ENCODE measurements at regions of chr2 and their contacts with region 1.

Region 1: GRCh38 chr2:26299471-26300101 is 46.4 kb upstream of the SELENOI start:
- DNase-seq: no peak
- H3K4me3 ChIP-seq: peak overlapping the region; percentile 39 to 69 (median 60)
- H3K27ac ChIP-seq: peak overlapping the region; percentile 84 to 88 (median 84)
- H3K4me1 ChIP-seq: peaks cover 0 to 23% (median 21%) of the 10 kb centered on the region in 4 donors
- H3K27me3 ChIP-seq: no peaks in the 10 kb centered on the region
- CTCF ChIP-seq: no peak
- EP300 ChIP-seq: peak in 1 of 4 donors; percentile 2
- POLR2A ChIP-seq: no peak

Region 2: DNA sequence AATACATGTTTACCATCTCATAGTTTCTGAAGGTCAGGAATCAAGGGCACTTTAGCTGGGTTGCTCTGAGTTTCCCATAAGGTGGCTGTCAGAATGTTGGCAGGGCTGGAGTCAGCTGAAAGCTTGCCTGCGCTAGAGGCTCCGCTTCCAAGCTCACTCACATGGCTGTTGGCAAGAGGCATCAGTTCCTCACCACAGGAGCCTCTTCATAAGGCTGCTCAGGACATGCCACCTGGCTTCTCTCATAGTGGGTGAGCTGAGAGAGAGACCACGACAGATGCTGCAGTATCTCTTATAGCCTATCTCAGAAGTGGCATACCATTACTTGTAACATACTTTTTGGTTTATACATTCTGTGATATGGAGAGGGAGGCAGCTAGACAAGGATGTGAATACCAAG is 47.7 kb before region 1 on chr2:
- intact Hi-C with region 1: loop called (anchors 2 kb)
- DNase-seq: peak; percentile 90
- H3K4me3 ChIP-seq: no peak overlapping the region
- H3K27ac ChIP-seq: peak overlapping the region; percentile 29 to 61 (median 51)
- H3K4me1 ChIP-seq: peaks cover 0 to 31% (median 16%) of the 10 kb centered on the region in 4 donors
- H3K27me3 ChIP-seq: no peaks in the 10 kb centered on the region
- CTCF ChIP-seq: no peak
- EP300 ChIP-seq: peak in 1 of 4 donors; percentile 47
- POLR2A ChIP-seq: no peak